Heart right ventricle (tissue), 16 donors: ENCODE measurements at regions of chr6 and their contacts with region 1.

Region 1: GRCh38 chr6:42539135-42539534 is 24.7 kb upstream of the UBR2 start:
- DNase-seq: no peak
- ATAC-seq: no peak
- H3K4me3 ChIP-seq: no peak overlapping the region
- H3K27ac ChIP-seq: no peak overlapping the region
- H3K4me1 ChIP-seq: peaks cover 0 to 19% (median 0%) of the 10 kb centered on the region in 9 donors
- H3K27me3 ChIP-seq: no peaks in the 10 kb centered on the region
- CTCF ChIP-seq: no peak

Region 2: DNA sequence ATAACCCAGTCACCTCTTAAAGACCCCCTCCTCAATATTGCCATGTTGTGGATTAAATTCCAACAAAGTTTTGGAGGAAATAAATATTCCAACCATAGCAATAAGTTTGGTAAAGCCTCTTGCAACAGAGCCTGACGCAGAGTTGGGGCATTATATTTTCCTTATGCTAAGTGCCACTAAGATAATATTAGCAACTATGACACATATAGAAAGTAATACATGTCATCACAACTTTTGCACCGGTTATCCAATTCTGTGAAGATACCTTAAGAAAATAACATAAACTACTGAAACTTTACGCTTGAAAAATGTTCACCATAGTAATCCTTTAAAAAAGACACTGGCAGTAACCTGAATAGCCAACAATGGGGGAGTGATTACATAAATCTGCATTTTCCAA is 35.2 kb before region 1 on chr6:
- intact Hi-C with region 1: loop called in 1 of 10 experiments (anchors 2 kb)
- DNase-seq: no peak
- ATAC-seq: no peak
- H3K4me3 ChIP-seq: no peak overlapping the region
- H3K27ac ChIP-seq: no peak overlapping the region
- H3K4me1 ChIP-seq: peaks cover 0 to 5% (median 0%) of the 10 kb centered on the region in 9 donors
- H3K27me3 ChIP-seq: peaks cover 0 to 4% (median 0%) of the 10 kb centered on the region in 7 donors
- CTCF ChIP-seq: no peak

Region 3: DNA sequence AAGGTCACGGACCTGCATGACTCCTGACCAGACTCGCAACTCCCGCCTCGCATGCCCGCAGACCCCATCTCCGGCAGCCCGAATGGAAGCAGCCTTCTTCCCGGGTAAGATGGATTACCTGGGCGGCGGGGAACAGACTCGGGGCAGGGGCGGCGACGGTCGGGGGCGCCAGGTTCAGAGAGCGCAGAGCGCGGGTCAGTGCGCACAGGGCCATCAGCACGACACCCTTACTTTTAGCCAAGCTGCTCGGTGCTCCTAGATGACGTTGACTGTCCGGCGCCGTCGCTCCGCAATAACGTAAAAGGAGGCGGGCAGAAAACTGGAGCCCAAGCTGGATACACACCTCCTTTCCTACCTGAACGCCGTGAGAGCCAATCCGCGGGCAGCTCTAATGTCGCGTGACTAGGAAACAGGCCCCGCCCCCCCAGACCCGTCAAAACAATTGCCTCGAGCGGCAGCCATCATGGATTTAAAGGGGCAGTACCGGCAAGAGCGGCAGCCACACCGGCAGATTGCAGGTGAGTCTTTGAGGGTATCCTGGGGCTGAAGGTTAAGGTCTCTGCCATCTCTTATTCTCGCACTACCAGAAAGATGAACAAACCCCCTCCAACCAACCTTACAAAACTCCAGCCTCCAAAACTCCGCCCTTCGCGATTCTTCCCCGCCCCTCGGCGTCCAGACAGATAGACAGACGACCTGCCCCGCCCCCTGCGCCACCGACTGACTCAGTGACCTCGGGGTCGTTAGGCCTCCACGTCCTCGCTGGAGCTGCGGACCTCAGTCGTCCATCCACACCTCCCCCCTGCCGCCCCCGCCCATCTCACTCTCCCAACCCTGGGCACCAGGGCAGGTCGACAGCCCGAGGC is 520.3 kb after region 1 on chr6 and contains the starts of genes KLC4 and MRPL2:
- intact Hi-C with region 1: no loop called
- DNase-seq: peak; percentile 96 to 99
- ATAC-seq: peak; percentile 95 to 99 (median 98)
- H3K4me3 ChIP-seq: peak within 1 kb of the TSS; percentile 73 to 96 (median 85)
- H3K27ac ChIP-seq: peak within 1 kb of the TSS; percentile 72 to 97 (median 89)
- H3K4me1 ChIP-seq: peaks cover 8 to 33% (median 30%) of the 10 kb centered on the region in 9 donors
- H3K27me3 ChIP-seq: no peaks in the 10 kb centered on the region
- CTCF ChIP-seq: no peak
- total RNA-seq, gene KLC4: 26.3 to 34.2 (median 28.3) TPM
- total RNA-seq, gene MRPL2: 76.0 to 139 (median 93.5) TPM

Region 4: GRCh38 chr6:43070028-43070632 is 531.0 kb after region 1 on chr6:
- intact Hi-C with region 1: no loop called
- DNase-seq: no peak
- ATAC-seq: peak in 1 of 8 donors; percentile 27
- H3K4me3 ChIP-seq: no peak overlapping the region
- H3K27ac ChIP-seq: no peak overlapping the region
- H3K4me1 ChIP-seq: no peaks in the 10 kb centered on the region
- H3K27me3 ChIP-seq: no peaks in the 10 kb centered on the region
- CTCF ChIP-seq: peak in 8 of 9 donors; percentile 13 to 56 (median 43)

Region 5: GRCh38 chr6:43570876-43571441 is 1031.8 kb after region 1 on chr6:
- intact Hi-C with region 1: no loop called
- DNase-seq: no peak
- ATAC-seq: no peak
- H3K4me3 ChIP-seq: no peak overlapping the region
- H3K27ac ChIP-seq: no peak overlapping the region
- H3K4me1 ChIP-seq: peaks cover 0 to 13% (median 8%) of the 10 kb centered on the region in 9 donors
- H3K27me3 ChIP-seq: no peaks in the 10 kb centered on the region
- CTCF ChIP-seq: no peak